Caco-2 (cell line): ENCODE measurements at regions of chr6 and their contacts with region 1.

Region 1: DNA sequence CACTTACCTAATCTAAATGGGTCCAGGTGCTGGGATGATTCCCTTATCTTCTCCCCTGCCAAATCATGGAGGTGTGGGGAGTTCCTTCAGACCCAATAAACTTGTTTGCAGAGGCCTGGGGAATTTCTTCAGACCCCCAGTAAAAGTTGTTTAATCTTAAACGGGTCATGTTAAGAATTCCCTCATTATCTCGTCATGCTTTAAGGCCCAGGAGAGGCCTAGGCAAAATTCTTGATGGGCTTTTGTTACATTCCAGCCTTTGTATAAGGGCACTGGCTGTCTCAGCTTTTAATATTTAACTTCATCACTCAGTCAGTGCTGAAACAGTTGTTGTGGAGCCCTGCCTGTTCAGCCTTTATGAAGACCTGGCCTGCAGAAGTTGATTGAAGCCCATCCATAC is 11.0 kb upstream of the SLC35B3 start:
- DNase-seq: peak; percentile 82 to 88
- H3K4me3 ChIP-seq: no peak overlapping the region
- H3K4me3 Mint-ChIP-seq: peak overlapping the region; percentile 83
- H3K27ac Mint-ChIP-seq: peak overlapping the region; percentile 93
- H3K4me1 ChIP-seq: peaks cover 56% of the 10 kb centered on the region
- H3K4me1 Mint-ChIP-seq: peaks cover 44% of the 10 kb centered on the region
- H3K27me3 ChIP-seq: no peaks in the 10 kb centered on the region
- H3K27me3 Mint-ChIP-seq: no peaks in the 10 kb centered on the region
- CTCF ChIP-seq: no peak

Region 2: DNA sequence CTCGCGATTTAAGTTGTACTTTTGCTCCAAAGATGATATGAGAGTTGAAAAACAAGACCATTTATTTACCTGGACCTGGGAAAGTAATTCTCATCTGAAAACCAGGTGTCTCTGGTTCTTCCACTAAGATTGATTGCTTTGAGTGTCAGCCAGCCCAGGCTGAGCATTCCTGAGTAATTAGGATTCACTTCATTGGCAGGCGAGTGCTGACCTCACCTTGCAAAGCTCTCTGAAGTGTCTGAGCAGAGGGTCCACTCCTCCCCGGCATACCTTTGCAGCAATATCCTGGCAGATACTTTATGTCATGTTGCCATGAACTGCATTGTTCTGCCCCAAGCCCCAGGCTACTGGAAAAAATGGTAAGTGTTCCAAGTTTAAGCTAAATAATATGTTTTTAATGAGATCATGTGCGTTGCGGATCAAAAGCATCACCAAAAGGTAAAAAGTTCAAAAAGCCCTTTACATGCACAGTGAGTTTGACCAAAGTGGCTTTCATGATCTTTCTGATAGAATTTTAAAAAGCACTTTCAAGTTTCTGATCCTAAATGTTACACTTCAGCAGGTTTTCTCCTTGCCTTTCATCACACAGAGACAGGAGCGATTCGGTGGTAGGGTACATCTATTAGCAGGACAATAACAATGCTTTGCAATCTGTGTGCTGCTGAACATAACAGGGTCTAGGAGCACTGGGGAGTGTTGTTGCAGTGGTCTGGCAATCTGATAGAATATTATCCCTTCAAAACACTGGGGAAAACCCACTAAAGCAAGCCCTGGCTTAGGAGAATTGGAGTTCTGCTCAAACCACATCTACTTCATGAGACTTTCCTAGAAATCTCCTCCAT is 216.3 kb before region 1 on chr6:
- CTCF ChIA-PET with region 1: no interaction called
- POLR2A ChIA-PET with region 1: no interaction called
- intact Hi-C with region 1: loop called (anchors 2 kb)
- DNase-seq: peak; percentile 79 to 89
- H3K4me3 ChIP-seq: no peak overlapping the region
- H3K4me3 Mint-ChIP-seq: peak overlapping the region; percentile 61
- H3K27ac Mint-ChIP-seq: peak overlapping the region; percentile 83
- H3K4me1 ChIP-seq: peaks cover 54% of the 10 kb centered on the region
- H3K4me1 Mint-ChIP-seq: peaks cover 31% of the 10 kb centered on the region
- H3K27me3 ChIP-seq: no peaks in the 10 kb centered on the region
- H3K27me3 Mint-ChIP-seq: no peaks in the 10 kb centered on the region
- CTCF ChIP-seq: no peak

Region 3: DNA sequence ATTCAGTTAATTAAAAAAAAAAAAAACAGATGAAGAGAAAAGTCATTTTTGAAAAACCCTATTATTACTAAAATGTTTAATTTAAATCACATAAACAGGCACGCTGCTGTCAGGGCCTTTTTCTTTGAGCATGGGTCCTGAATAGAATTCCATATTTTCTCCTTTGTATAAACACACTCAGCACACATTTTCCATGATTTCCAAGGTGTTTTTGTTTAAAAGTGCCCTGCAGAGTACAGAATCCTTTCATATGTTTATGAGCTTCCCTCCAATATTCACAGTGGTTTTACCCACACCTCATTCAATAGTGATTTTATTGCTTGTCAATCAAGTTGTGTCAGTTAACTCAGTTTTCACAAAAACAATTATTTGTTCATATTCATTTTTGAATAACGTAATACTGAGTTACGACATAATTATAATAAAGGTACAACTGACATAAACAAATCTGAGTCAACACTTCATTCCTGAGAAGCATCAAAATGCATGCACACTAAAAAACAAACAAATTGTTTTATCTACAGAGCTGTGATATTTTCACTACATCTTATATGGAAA is 26.3 kb before region 1 on chr6:
- CTCF ChIA-PET with region 1: no interaction called
- POLR2A ChIA-PET with region 1: no interaction called
- intact Hi-C with region 1: loop called (anchors 1 kb)
- DNase-seq: no peak
- H3K4me3 ChIP-seq: no peak overlapping the region
- H3K4me3 Mint-ChIP-seq: no peak overlapping the region
- H3K27ac Mint-ChIP-seq: no peak overlapping the region
- H3K4me1 ChIP-seq: peaks cover 17% of the 10 kb centered on the region
- H3K4me1 Mint-ChIP-seq: peaks cover 13% of the 10 kb centered on the region
- H3K27me3 ChIP-seq: no peaks in the 10 kb centered on the region
- H3K27me3 Mint-ChIP-seq: no peaks in the 10 kb centered on the region
- CTCF ChIP-seq: no peak

Region 4: DNA sequence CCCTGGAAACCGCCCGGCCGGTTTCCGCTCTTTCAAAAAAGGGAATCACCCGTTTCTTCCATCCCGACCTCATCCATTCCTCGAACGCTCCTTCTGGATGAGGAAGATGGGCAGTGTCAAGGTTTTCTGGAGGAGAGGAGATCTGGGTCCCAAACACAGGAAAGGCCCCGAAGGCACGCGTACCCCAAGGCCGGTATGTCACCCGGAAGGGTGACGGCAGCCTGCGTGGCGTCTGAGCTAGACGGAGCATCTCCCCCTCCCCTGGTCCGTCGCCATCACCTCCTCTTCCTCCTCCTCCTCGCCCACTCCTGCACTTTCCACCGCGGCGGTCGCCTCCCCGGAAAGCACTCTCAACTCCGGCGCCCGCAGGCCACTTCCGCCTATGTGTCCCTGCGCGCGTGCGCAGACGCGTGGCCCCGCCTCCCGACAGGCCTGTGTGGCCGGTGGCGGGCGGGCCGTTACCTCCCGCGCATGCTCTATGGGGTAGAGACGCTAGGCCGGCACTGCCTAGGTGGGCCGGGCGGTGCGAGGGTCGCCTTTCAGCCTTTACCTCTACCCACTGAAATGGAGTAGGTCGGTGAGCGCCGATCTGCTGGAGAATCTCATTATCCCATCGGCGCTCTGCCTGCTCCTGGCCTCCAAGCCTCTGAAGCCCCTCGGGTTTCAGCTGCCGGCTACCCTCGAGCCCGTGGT is 11.1 kb before region 1 on chr6 and contains the start of gene SLC35B3:
- CTCF ChIA-PET with region 1: interaction called, 4 read pairs
- POLR2A ChIA-PET with region 1: interaction called, 5 read pairs
- intact Hi-C with region 1: loop called (anchors 1 kb)
- DNase-seq: peak; percentile 94 to 98
- H3K4me3 ChIP-seq: peak within 1 kb of the TSS; percentile 100
- H3K4me3 Mint-ChIP-seq: peak within 1 kb of the TSS; percentile 90
- H3K27ac Mint-ChIP-seq: peak within 1 kb of the TSS; percentile 89
- H3K4me1 ChIP-seq: peaks cover 49% of the 10 kb centered on the region
- H3K4me1 Mint-ChIP-seq: peaks cover 48% of the 10 kb centered on the region
- H3K27me3 ChIP-seq: no peaks in the 10 kb centered on the region
- H3K27me3 Mint-ChIP-seq: no peaks in the 10 kb centered on the region
- CTCF ChIP-seq: no peak
- total RNA-seq, gene SLC35B3: 38.7 and 41.3 TPM in 2 replicates

Region 5: GRCh38 chr6:8549074-8549790 is 102.8 kb after region 1 on chr6:
- CTCF ChIA-PET with region 1: no interaction called
- POLR2A ChIA-PET with region 1: interaction called, 11 read pairs
- intact Hi-C with region 1: no loop called
- DNase-seq: peak; percentile 53 to 56
- H3K4me3 ChIP-seq: no peak overlapping the region
- H3K4me3 Mint-ChIP-seq: no peak overlapping the region
- H3K27ac Mint-ChIP-seq: peak overlapping the region; percentile 42
- H3K4me1 ChIP-seq: peaks cover 28% of the 10 kb centered on the region
- H3K4me1 Mint-ChIP-seq: peaks cover 6% of the 10 kb centered on the region
- H3K27me3 ChIP-seq: no peaks in the 10 kb centered on the region
- H3K27me3 Mint-ChIP-seq: no peaks in the 10 kb centered on the region
- CTCF ChIP-seq: no peak

Region 6: DNA sequence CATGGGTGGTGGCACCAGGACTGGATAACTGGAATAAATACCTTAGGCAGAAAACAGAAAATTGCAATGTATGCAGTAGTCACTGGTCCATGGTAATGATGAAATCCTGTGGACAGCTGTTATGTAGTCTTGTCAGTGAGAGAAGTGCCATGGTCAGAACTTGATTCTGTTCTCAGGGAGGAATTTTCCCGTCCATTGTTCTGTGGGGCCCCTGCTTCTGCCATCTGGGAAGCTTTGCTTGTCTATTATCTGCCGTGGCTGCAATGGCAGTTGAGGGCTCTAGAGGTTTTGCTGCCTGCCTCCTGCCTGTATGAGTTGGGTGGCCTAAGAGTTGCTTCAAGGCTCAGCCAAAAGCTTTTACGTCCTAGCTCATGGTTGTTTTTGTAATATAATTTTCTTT is 115.7 kb after region 1 on chr6:
- CTCF ChIA-PET with region 1: no interaction called
- POLR2A ChIA-PET with region 1: no interaction called
- intact Hi-C with region 1: no loop called
- DNase-seq: no peak
- H3K4me3 ChIP-seq: no peak overlapping the region
- H3K4me3 Mint-ChIP-seq: no peak overlapping the region
- H3K27ac Mint-ChIP-seq: no peak overlapping the region
- H3K4me1 ChIP-seq: no peaks in the 10 kb centered on the region
- H3K4me1 Mint-ChIP-seq: peaks cover 6% of the 10 kb centered on the region
- H3K27me3 ChIP-seq: no peaks in the 10 kb centered on the region
- H3K27me3 Mint-ChIP-seq: no peaks in the 10 kb centered on the region
- CTCF ChIP-seq: no peak

Region 7: GRCh38 chr6:8579372-8579771 is 133.0 kb after region 1 on chr6:
- CTCF ChIA-PET with region 1: no interaction called
- POLR2A ChIA-PET with region 1: no interaction called
- intact Hi-C with region 1: no loop called
- DNase-seq: no peak
- H3K4me3 ChIP-seq: no peak overlapping the region
- H3K4me3 Mint-ChIP-seq: no peak overlapping the region
- H3K27ac Mint-ChIP-seq: no peak overlapping the region
- H3K4me1 ChIP-seq: no peaks in the 10 kb centered on the region
- H3K4me1 Mint-ChIP-seq: no peaks in the 10 kb centered on the region
- H3K27me3 ChIP-seq: no peaks in the 10 kb centered on the region
- H3K27me3 Mint-ChIP-seq: no peaks in the 10 kb centered on the region
- CTCF ChIP-seq: no peak